Right lobe of liver (tissue), 6 donors: ENCODE measurements at regions of chr17 and their contacts with region 1.

Region 1: GRCh38 chr17:6163612-6164333 is 93.6 kb downstream of the WSCD1 start:
- DNase-seq: no peak
- ATAC-seq: no peak
- H3K4me3 ChIP-seq: no peak overlapping the region
- H3K27ac ChIP-seq: no peak overlapping the region
- H3K4me1 ChIP-seq: no peaks in the 10 kb centered on the region
- H3K27me3 ChIP-seq: no peaks in the 10 kb centered on the region
- CTCF ChIP-seq: no peak
- POLR2A ChIP-seq: no peak

Region 2: DNA sequence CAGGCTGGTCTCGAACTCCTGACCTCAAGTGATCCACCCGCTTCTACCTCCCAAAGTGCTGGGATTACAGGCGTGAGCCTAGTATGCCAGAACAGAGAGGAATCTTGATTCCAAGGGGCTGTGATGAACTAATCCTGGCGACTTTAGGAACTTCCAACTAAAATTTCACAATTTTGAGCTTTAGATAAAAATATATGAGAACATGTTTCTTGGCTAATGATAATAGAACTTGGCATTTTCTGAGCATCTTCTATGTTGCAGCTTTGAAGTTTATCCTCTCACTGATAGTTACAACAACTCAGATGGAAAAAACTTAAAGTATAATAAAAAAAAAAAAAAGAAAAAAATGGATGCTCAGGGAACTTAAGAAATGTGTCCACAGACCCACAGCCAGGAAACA is 163.3 kb before region 1 on chr17:
- intact Hi-C with region 1: no loop called
- DNase-seq: no peak
- ATAC-seq: no peak
- H3K4me3 ChIP-seq: no peak overlapping the region
- H3K27ac ChIP-seq: no peak overlapping the region
- H3K4me1 ChIP-seq: no peaks in the 10 kb centered on the region
- H3K27me3 ChIP-seq: no peaks in the 10 kb centered on the region
- CTCF ChIP-seq: no peak
- POLR2A ChIP-seq: no peak

Region 3: GRCh38 chr17:6104956-6105648 is 58.7 kb before region 1 on chr17:
- intact Hi-C with region 1: loop called in 1 of 2 experiments (anchors 10 kb)
- DNase-seq: no peak
- ATAC-seq: no peak
- H3K4me3 ChIP-seq: no peak overlapping the region
- H3K27ac ChIP-seq: no peak overlapping the region
- H3K4me1 ChIP-seq: no peaks in the 10 kb centered on the region
- H3K27me3 ChIP-seq: no peaks in the 10 kb centered on the region
- CTCF ChIP-seq: no peak
- POLR2A ChIP-seq: no peak

Region 4: GRCh38 chr17:6334395-6334794 is 170.6 kb after region 1 on chr17:
- intact Hi-C with region 1: loop called in 1 of 2 experiments (anchors 5 kb)
- DNase-seq: no peak
- ATAC-seq: no peak
- H3K4me3 ChIP-seq: no peak overlapping the region
- H3K27ac ChIP-seq: no peak overlapping the region
- H3K4me1 ChIP-seq: no peaks in the 10 kb centered on the region
- H3K27me3 ChIP-seq: no peaks in the 10 kb centered on the region
- CTCF ChIP-seq: no peak
- POLR2A ChIP-seq: no peak